GM12878 (cell line): ENCODE measurements at regions of chr14 and their contacts with region 1.

Region 1: DNA sequence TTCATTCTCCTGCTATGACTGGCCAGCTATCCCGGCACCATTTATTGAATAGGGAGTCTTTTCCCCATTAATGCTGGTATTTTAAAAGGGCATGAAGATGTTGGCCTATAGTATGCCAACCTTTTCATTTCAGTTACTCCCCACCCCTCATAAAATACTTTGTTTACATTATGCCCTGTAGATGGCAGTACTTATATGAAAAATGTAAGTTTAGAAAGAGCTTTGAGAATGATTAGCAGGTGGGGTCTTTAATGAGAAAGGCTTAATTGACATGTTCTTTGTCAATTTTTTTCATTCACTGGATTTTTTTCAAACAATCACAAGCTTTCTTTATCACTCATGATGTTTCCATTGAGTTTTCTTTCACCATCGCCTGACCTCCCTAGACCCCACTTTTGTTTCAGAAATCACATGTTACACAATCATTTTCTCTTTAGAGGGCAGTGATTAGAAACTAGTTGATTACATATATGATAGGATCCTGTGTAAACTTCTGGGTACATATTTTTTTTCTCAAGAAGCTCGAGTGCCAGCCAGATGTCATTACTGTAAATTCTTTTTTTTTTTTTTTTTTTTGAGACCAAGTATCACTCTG is 62.6 kb upstream of the PSMA6 start:
- DNase-seq: no peak
- ATAC-seq: peak; percentile 79
- H3K4me3 ChIP-seq: no peak overlapping the region
- H3K27ac ChIP-seq: no peak overlapping the region
- H3K4me1 ChIP-seq: peaks cover 5% of the 10 kb centered on the region; the same call in 1 of the 2 replicates
- H3K27me3 ChIP-seq: no peaks in the 10 kb centered on the region
- CTCF ChIP-seq: peak; percentile 33 to 47 (median 40); a peak in 5 of 6 replicates
- EP300 ChIP-seq: no peak
- POLR2A ChIP-seq: no peak
- RAD21 ChIP-seq: peak; percentile 65

Region 2: DNA sequence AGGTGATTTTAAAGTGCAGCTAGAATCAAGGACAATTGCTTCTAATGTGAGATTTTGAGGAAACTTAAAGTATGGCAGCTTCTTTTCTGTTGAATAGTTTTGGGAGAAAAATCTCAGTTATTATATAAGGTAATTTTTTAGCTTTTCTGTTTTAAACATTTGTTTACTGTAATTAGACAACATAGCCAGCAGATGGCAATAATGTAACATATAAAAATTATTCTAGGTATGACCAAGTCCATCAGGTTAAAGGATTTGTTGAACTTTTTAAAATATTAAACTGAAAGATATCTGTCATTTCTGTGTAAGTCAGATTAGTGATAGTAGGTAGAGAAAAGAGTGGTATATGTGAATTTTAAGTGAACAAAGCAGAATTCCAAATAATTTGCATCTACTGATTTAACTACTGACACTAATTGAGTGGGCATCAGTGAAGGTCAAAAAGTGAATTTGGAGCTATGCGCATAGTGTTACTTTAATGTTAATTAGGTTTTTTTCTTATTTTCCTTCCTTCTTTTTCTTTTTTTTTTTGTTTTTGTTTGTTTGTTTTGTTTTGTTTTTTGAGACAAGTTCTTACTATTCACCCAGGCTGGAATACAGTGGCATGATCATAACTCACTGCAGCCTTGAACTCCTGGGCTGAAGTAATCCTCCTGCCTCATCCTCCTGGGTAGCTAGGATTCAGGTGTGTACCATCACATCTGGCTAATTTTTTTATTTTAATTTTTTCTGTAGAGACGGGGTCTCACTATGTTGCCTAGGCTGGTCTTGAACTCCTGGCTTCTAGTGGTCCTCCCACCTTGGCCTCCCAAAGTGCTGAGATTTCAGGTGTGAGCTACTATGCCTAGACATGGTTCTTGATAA is 88.6 kb before region 1 on chr14:
- CTCF ChIA-PET with region 1: interaction called, 141 read pairs
- POLR2A ChIA-PET with region 1: no interaction called
- RAD21 ChIA-PET with region 1: interaction called, 43 read pairs
- SMC1A ChIA-PET with region 1: interaction called, 54 read pairs
- in situ Hi-C with region 1: no loop called
- intact Hi-C with region 1: loop called (anchors 5 kb)
- DNase-seq: no peak
- ATAC-seq: peak; percentile 60
- H3K4me3 ChIP-seq: no peak overlapping the region
- H3K27ac ChIP-seq: no peak overlapping the region
- H3K4me1 ChIP-seq: peaks cover 10% of the 10 kb centered on the region
- H3K27me3 ChIP-seq: no peaks in the 10 kb centered on the region
- CTCF ChIP-seq: peak in 2 of 3 experiments; percentile 11 to 23; a peak in 3 of 6 replicates
- EP300 ChIP-seq: no peak
- POLR2A ChIP-seq: no peak
- RAD21 ChIP-seq: peak; percentile 60

Region 3: DNA sequence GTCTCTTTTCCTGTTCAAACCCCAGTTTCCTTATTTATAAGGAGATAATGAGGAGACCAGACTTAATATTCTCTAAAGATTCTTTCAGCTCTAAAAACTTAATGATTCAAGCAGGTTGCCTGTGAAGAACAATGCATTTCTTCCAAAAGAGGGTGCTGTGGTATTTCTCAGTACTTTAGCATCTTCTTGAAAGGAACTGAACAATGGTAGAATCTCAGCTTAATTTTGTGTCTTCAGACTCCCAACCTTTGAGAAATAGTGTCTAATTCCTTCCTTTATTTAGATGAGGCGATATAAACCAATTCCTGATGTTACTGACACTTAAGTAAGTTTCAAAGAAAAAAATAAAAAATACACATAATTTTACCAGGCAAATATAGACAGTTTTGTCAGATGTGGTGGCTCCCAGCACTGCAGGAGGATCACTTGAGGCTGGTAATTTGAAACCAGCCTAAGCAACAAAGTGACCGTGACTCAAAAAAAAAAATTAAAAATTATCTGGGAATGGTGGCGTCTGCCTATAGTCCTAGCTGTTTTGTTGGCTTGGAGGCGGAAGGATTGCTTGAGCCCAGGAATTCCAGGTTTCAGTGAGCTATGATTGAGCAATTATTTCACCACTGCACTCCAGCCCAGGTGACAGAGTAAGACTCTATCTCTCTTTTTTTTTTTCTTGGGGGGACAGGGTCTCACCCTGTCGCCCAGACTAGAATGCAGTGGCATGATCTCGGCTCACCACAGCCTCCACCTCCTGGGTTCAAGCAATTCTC is 14.3 kb before region 1 on chr14:
- CTCF ChIA-PET with region 1: interaction called, 29 read pairs
- POLR2A ChIA-PET with region 1: interaction called, 4 read pairs
- RAD21 ChIA-PET with region 1: interaction called, 8 read pairs
- SMC1A ChIA-PET with region 1: interaction called, 24 read pairs
- in situ Hi-C with region 1: no loop called
- intact Hi-C with region 1: no loop called
- DNase-seq: no peak
- ATAC-seq: peak; percentile 63
- H3K4me3 ChIP-seq: no peak overlapping the region
- H3K27ac ChIP-seq: no peak overlapping the region
- H3K4me1 ChIP-seq: no peaks in the 10 kb centered on the region
- H3K27me3 ChIP-seq: no peaks in the 10 kb centered on the region
- CTCF ChIP-seq: peak; percentile 24 to 61 (median 31); a peak in 5 of 6 replicates
- EP300 ChIP-seq: no peak
- POLR2A ChIP-seq: no peak
- RAD21 ChIP-seq: peak; percentile 69

Region 4: GRCh38 chr14:35261774-35262173 is 32.2 kb after region 1 on chr14:
- CTCF ChIA-PET with region 1: interaction called, 10 read pairs
- POLR2A ChIA-PET with region 1: no interaction called
- RAD21 ChIA-PET with region 1: interaction called, 3 read pairs
- SMC1A ChIA-PET with region 1: interaction called, 4 read pairs
- in situ Hi-C with region 1: no loop called
- intact Hi-C with region 1: no loop called
- DNase-seq: no peak
- ATAC-seq: peak; percentile 36; the same call in 2 of the 3 replicates
- H3K4me3 ChIP-seq: no peak overlapping the region
- H3K27ac ChIP-seq: no peak overlapping the region
- H3K4me1 ChIP-seq: no peaks in the 10 kb centered on the region
- H3K27me3 ChIP-seq: no peaks in the 10 kb centered on the region
- CTCF ChIP-seq: peak in 1 of 3 experiments; percentile 30; a peak in 1 of 6 replicates
- EP300 ChIP-seq: no peak
- POLR2A ChIP-seq: no peak
- RAD21 ChIP-seq: peak; percentile 50

Region 5: GRCh38 chr14:35292051-35292769 is 62.6 kb after region 1 on chr14 and contains the start of gene PSMA6:
- CTCF ChIA-PET with region 1: interaction called, 15 read pairs
- POLR2A ChIA-PET with region 1: interaction called, 4 read pairs
- RAD21 ChIA-PET with region 1: interaction called, 21 read pairs
- SMC1A ChIA-PET with region 1: interaction called, 12 read pairs
- in situ Hi-C with region 1: no loop called
- intact Hi-C with region 1: loop called (anchors 5 kb)
- DNase-seq: peak; percentile 98
- ATAC-seq: peak; percentile 90
- H3K4me3 ChIP-seq: peak within 1 kb of the TSS; percentile 86
- H3K27ac ChIP-seq: peak within 1 kb of the TSS; percentile 80
- H3K4me1 ChIP-seq: peaks cover 18% of the 10 kb centered on the region
- H3K27me3 ChIP-seq: no peaks in the 10 kb centered on the region
- CTCF ChIP-seq: no peak
- EP300 ChIP-seq: 0 out of 4 replicates have a peak, but pooled peaks have one; percentile 20 to 36
- POLR2A ChIP-seq: peak; percentile 83
- RAD21 ChIP-seq: no peak
- polyA plus RNA-seq, gene PSMA6: 1,136 to 1,363 TPM

Region 6: GRCh38 chr14:35687335-35687939 is 457.8 kb after region 1 on chr14:
- CTCF ChIA-PET with region 1: interaction called, 6 read pairs
- POLR2A ChIA-PET with region 1: no interaction called
- RAD21 ChIA-PET with region 1: interaction called, 3 read pairs
- SMC1A ChIA-PET with region 1: interaction called, 7 read pairs
- in situ Hi-C with region 1: no loop called
- intact Hi-C with region 1: loop called (anchors 5 kb)
- DNase-seq: peak; percentile 2
- ATAC-seq: peak; percentile 90
- H3K4me3 ChIP-seq: no peak overlapping the region
- H3K27ac ChIP-seq: no peak overlapping the region
- H3K4me1 ChIP-seq: peaks cover 15% of the 10 kb centered on the region; the same call in 1 of the 2 replicates
- H3K27me3 ChIP-seq: no peaks in the 10 kb centered on the region
- CTCF ChIP-seq: peak; percentile 71 to 89 (median 89)
- EP300 ChIP-seq: no peak
- POLR2A ChIP-seq: no peak
- RAD21 ChIP-seq: peak; percentile 99

Region 7: DNA sequence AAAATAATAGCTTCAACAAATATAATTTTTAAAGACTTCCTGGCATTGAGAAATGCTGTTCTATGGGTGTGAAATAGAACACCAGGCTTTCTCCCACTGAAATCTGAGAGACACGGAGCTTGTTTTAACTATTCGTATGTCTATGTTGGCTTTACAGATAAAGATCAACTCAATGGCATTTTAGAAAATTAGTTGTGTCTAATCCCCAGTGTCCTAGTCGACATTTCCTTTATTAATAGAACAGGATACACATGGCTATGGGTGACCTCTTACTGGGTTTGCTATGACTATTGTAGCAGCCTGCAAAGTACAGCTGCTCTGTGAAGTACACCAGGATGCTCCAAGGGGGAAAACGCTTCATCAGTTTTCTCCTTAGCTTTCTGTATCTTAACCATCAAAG is 1783.5 kb after region 1 on chr14:
- CTCF ChIA-PET with region 1: no interaction called
- POLR2A ChIA-PET with region 1: no interaction called
- RAD21 ChIA-PET with region 1: no interaction called
- SMC1A ChIA-PET with region 1: no interaction called
- in situ Hi-C with region 1: no loop called
- intact Hi-C with region 1: no loop called
- DNase-seq: no peak
- ATAC-seq: no peak
- H3K4me3 ChIP-seq: no peak overlapping the region
- H3K27ac ChIP-seq: no peak overlapping the region
- H3K4me1 ChIP-seq: no peaks in the 10 kb centered on the region
- H3K27me3 ChIP-seq: no peaks in the 10 kb centered on the region
- CTCF ChIP-seq: no peak
- EP300 ChIP-seq: no peak
- POLR2A ChIP-seq: no peak
- RAD21 ChIP-seq: no peak